ENCODE measurements at regions of chr22 and their contacts with region 1.

Region 1: DNA sequence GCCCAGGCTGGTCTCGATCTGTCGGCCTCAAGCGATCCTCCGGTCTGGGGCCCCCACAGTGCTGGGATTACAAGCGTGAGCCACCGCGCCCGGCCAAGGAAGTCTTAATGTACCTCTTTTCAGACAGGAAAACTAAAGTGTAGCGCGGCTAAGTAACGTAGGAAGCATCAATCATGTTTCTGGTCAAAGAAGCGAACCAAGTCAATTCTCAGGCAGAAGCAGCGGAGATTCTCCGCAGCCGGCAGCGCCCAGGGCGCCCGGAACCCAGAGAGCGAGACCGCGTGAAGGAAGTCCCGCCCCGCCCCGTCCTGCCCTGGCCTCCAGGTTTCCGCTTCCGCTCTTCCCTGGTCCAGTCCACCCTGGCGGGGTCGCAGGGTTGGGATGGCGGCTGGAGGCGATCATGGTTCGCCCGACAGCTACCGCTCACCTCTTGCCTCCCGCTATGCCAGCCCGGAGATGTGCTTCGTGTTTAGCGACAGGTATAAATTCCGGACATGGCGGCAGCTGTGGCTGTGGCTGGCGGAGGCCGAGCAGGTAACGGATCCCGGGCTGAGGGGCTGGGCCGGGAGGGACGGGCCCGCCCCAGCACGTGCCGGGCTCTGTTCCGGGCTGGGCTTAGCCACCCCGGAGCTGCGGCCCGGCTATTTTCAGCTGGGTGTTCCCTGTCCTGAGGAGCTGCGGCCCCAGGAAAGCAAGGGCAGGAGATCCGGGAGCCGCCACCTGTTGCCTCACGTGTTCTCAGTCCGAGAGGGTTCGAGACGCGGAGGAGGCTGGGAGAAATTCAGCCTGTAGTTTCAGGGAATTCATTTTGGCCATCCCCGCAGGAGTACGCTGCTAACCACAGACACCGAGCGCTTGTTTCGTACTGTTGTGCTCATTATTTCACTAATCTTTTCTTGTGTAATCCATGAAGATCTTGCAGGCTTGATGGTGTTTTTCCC is at the start of gene ADSL:
- DNase-seq: peak; percentile 90
- ATAC-seq: peak; percentile 91
- H3K4me3 Mint-ChIP-seq: peak within 1 kb of the TSS; percentile 94
- H3K27ac Mint-ChIP-seq: peak within 1 kb of the TSS; percentile 97
- H3K4me1 Mint-ChIP-seq: peaks cover 52% of the 10 kb centered on the region
- H3K27me3 Mint-ChIP-seq: no peaks in the 10 kb centered on the region
- total RNA-seq, gene ADSL: 109 to 118 TPM

Region 2: GRCh38 chr22:40036591-40037225 is 309.7 kb before region 1 on chr22:
- CTCF ChIA-PET with region 1: interaction called, 19 read pairs
- POLR2A ChIA-PET with region 1: no interaction called
- DNase-seq: peak; percentile 73
- ATAC-seq: peak; percentile 76
- H3K4me3 Mint-ChIP-seq: no peak overlapping the region
- H3K27ac Mint-ChIP-seq: no peak overlapping the region
- H3K4me1 Mint-ChIP-seq: peaks cover 31% of the 10 kb centered on the region
- H3K27me3 Mint-ChIP-seq: peaks cover 8% of the 10 kb centered on the region

Region 3: DNA sequence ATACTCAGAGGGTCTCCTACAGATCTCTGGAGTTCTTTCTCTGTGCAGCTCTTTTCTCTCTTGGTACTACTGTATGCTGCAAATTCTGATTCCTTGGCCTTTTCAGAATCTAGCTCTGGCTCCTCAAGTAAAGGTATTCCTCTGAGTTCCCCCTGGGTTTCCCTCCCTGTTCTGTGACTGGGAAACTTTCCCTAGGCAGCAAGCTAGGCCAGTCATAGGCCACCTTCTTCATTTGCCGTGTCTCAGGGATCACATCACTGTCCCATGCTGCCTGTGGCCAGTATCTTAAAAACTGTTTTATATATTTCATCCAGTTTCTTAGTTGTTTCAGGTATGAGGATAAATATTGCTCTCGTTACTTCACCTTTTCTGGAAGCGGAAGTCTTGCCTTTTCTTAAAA is 280.5 kb before region 1 on chr22:
- CTCF ChIA-PET with region 1: interaction called, 10 read pairs
- POLR2A ChIA-PET with region 1: interaction called, 3 read pairs
- DNase-seq: no peak
- ATAC-seq: no peak
- H3K4me3 Mint-ChIP-seq: no peak overlapping the region
- H3K27ac Mint-ChIP-seq: no peak overlapping the region
- H3K4me1 Mint-ChIP-seq: peaks cover 36% of the 10 kb centered on the region
- H3K27me3 Mint-ChIP-seq: no peaks in the 10 kb centered on the region

Region 4: DNA sequence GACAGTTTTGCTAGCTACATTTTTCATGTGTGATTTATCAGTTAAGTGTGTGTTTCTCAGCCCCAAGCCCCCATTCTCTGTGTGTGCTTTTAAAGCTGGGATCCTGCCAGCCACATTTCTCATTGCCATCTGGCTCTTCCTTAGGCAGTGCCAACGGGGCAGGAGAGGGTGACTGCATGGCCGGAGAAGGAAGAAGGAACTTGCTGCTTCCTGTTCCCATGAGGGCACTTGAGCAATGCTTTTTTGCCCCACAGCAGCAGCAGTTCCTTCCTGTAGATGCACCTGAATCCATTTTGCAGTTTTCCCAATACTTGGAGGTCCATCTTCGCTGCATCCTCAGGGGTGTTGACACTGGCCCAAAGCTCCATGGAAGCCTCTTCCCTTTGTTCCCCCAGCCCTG is 131.2 kb before region 1 on chr22:
- CTCF ChIA-PET with region 1: interaction called, 15 read pairs
- POLR2A ChIA-PET with region 1: interaction called, 3 read pairs
- DNase-seq: peak; percentile 22
- ATAC-seq: no peak
- H3K4me3 Mint-ChIP-seq: peak overlapping the region; percentile 62
- H3K27ac Mint-ChIP-seq: peak overlapping the region; percentile 85
- H3K4me1 Mint-ChIP-seq: peaks cover 83% of the 10 kb centered on the region
- H3K27me3 Mint-ChIP-seq: no peaks in the 10 kb centered on the region

Region 5: GRCh38 chr22:40300884-40301672 is 45.4 kb before region 1 on chr22:
- CTCF ChIA-PET with region 1: interaction called, 13 read pairs
- POLR2A ChIA-PET with region 1: interaction called, 3 read pairs
- DNase-seq: no peak
- ATAC-seq: peak; percentile 71
- H3K4me3 Mint-ChIP-seq: no peak overlapping the region
- H3K27ac Mint-ChIP-seq: peak overlapping the region; percentile 39
- H3K4me1 Mint-ChIP-seq: peaks cover 20% of the 10 kb centered on the region
- H3K27me3 Mint-ChIP-seq: no peaks in the 10 kb centered on the region

Region 6: GRCh38 chr22:40332319-40332781 is 14.1 kb before region 1 on chr22:
- CTCF ChIA-PET with region 1: interaction called, 30 read pairs
- POLR2A ChIA-PET with region 1: interaction called, 14 read pairs
- DNase-seq: no peak
- ATAC-seq: peak; percentile 35
- H3K4me3 Mint-ChIP-seq: peak overlapping the region; percentile 51
- H3K27ac Mint-ChIP-seq: peak overlapping the region; percentile 35
- H3K4me1 Mint-ChIP-seq: peaks cover 87% of the 10 kb centered on the region
- H3K27me3 Mint-ChIP-seq: no peaks in the 10 kb centered on the region